Panc1 (cell line): ENCODE measurements at regions of chr1 and their contacts with region 1.

Region 1: GRCh38 chr1:45393718-45394302 is 53.6 kb upstream of the MUTYH start:
- DNase-seq: no peak
- ATAC-seq: no peak
- H3K4me3 ChIP-seq: no peak overlapping the region
- H3K27ac ChIP-seq: no peak overlapping the region
- H3K4me1 ChIP-seq: no peaks in the 10 kb centered on the region
- H3K27me3 ChIP-seq: no peaks in the 10 kb centered on the region
- CTCF ChIP-seq: no peak

Region 2: GRCh38 chr1:45272983-45273382 is 120.8 kb before region 1 on chr1:
- CTCF ChIA-PET with region 1: no interaction called
- POLR2A ChIA-PET with region 1: no interaction called
- in situ Hi-C with region 1: no loop called
- intact Hi-C with region 1: no loop called
- DNase-seq: no peak
- ATAC-seq: no peak
- H3K4me3 ChIP-seq: no peak overlapping the region
- H3K27ac ChIP-seq: no peak overlapping the region
- H3K4me1 ChIP-seq: no peaks in the 10 kb centered on the region
- H3K27me3 ChIP-seq: no peaks in the 10 kb centered on the region
- CTCF ChIP-seq: no peak

Region 3: GRCh38 chr1:45348020-45348419 is 45.8 kb before region 1 on chr1:
- CTCF ChIA-PET with region 1: no interaction called
- POLR2A ChIA-PET with region 1: interaction called, 16 read pairs
- in situ Hi-C with region 1: no loop called
- intact Hi-C with region 1: no loop called
- DNase-seq: no peak
- ATAC-seq: peak; percentile 34
- H3K4me3 ChIP-seq: no peak overlapping the region
- H3K27ac ChIP-seq: no peak overlapping the region
- H3K4me1 ChIP-seq: no peaks in the 10 kb centered on the region
- H3K27me3 ChIP-seq: no peaks in the 10 kb centered on the region
- CTCF ChIP-seq: no peak

Region 4: DNA sequence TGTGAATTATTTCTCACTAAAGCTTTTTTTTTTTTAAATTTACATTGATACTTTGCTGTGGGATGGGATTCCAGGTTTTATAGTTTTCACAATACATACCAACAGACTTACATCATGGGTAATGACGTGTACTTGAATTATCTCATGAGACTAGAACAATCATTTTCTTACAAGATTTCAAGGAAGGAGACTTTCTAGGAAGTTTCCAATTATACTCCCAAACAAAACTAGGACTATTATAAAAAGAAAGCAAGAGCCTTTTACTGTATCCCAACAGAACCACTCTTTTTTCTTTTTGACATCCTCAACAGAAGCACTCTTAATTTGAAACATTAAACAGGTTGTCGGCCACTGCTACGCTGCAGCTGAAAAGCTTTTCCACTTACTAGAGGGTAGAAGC is 48.5 kb after region 1 on chr1:
- CTCF ChIA-PET with region 1: no interaction called
- POLR2A ChIA-PET with region 1: no interaction called
- in situ Hi-C with region 1: no loop called
- intact Hi-C with region 1: no loop called
- DNase-seq: no peak
- ATAC-seq: no peak
- H3K4me3 ChIP-seq: no peak overlapping the region
- H3K27ac ChIP-seq: no peak overlapping the region
- H3K4me1 ChIP-seq: no peaks in the 10 kb centered on the region
- H3K27me3 ChIP-seq: no peaks in the 10 kb centered on the region
- CTCF ChIP-seq: no peak

Region 5: GRCh38 chr1:45589861-45590260 is 196.1 kb after region 1 on chr1:
- CTCF ChIA-PET with region 1: no interaction called
- POLR2A ChIA-PET with region 1: no interaction called
- in situ Hi-C with region 1: no loop called
- intact Hi-C with region 1: no loop called
- DNase-seq: no peak
- ATAC-seq: peak; percentile 46
- H3K4me3 ChIP-seq: peak overlapping the region; percentile 12 to 24; a peak in 3 of 4 replicates
- H3K27ac ChIP-seq: peak overlapping the region; percentile 39; the same call in 1 of the 2 replicates
- H3K4me1 ChIP-seq: peaks cover 12% of the 10 kb centered on the region
- H3K27me3 ChIP-seq: no peaks in the 10 kb centered on the region
- CTCF ChIP-seq: no peak